GM12878 (cell line): ENCODE measurements at regions of chr19 and their contacts with region 1.

Region 1: DNA sequence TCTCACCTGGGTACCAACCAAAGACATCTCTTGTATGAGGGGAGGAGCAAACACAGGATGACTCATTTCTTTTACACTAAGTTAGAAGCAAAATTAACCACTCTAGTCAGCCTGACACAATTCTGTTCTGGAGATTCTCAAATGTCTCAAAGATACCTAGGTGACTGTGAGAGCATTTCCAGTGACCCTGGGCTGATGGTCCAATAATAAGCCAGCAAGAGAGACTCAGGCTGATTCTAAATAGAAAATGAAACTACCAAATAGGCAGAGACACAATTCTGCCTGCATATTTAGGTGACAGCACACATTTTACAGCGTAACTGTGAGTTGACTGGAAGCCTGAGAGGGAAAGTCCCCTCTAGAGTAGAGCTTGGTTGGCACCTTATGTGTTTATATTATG is 16.3 kb downstream of the ZNF91 start:
- DNase-seq: no peak
- ATAC-seq: no peak
- H3K4me3 ChIP-seq: no peak overlapping the region
- H3K27ac ChIP-seq: no peak overlapping the region
- H3K4me1 ChIP-seq: no peaks in the 10 kb centered on the region
- H3K27me3 ChIP-seq: no peaks in the 10 kb centered on the region
- CTCF ChIP-seq: no peak
- EP300 ChIP-seq: no peak
- POLR2A ChIP-seq: no peak
- RAD21 ChIP-seq: no peak

Region 2: GRCh38 chr19:23287620-23288019 is 91.3 kb before region 1 on chr19:
- CTCF ChIA-PET with region 1: no interaction called
- POLR2A ChIA-PET with region 1: no interaction called
- RAD21 ChIA-PET with region 1: no interaction called
- SMC1A ChIA-PET with region 1: no interaction called
- in situ Hi-C with region 1: no loop called
- intact Hi-C with region 1: no loop called
- DNase-seq: no peak
- ATAC-seq: no peak
- H3K4me3 ChIP-seq: no peak overlapping the region
- H3K27ac ChIP-seq: no peak overlapping the region
- H3K4me1 ChIP-seq: no peaks in the 10 kb centered on the region
- H3K27me3 ChIP-seq: no peaks in the 10 kb centered on the region
- CTCF ChIP-seq: no peak
- EP300 ChIP-seq: no peak
- POLR2A ChIP-seq: no peak
- RAD21 ChIP-seq: no peak

Region 3: DNA sequence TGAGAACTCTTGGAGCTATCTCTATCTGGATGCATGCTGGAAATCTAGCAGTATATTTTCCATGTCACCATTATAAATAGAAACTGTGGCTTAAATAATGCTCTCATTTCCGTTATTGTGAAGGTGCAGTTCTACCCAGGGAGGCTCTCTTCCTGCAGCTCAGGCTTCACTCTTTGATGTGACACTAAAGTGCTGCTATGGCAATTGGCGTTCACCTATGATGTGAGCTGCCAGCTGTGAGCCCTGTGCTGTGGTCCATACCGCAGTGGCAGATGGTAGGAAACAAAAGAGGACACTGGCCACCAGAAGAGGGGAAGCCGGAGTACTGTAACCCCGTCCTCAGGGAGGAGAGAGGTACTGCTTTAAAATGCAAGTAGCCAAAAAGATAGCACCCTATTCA is 420.4 kb after region 1 on chr19:
- CTCF ChIA-PET with region 1: no interaction called
- POLR2A ChIA-PET with region 1: no interaction called
- RAD21 ChIA-PET with region 1: no interaction called
- SMC1A ChIA-PET with region 1: no interaction called
- in situ Hi-C with region 1: loop called (anchors 5 kb)
- intact Hi-C with region 1: no loop called
- DNase-seq: peak; percentile 5
- ATAC-seq: no peak
- H3K4me3 ChIP-seq: no peak overlapping the region
- H3K27ac ChIP-seq: no peak overlapping the region
- H3K4me1 ChIP-seq: no peaks in the 10 kb centered on the region
- H3K27me3 ChIP-seq: no peaks in the 10 kb centered on the region
- CTCF ChIP-seq: no peak
- EP300 ChIP-seq: no peak
- POLR2A ChIP-seq: no peak
- RAD21 ChIP-seq: no peak